CD4-positive, alpha-beta memory T cell (primary cell): ENCODE measurements at regions of chr10 and their contacts with region 1.

Region 1: GRCh38 chr10:100267237-100268104 is at the start of gene CWF19L1:
- DNase-seq: peak; percentile 67 to 75 (median 69)
- H3K4me3 ChIP-seq: peak within 1 kb of the TSS; percentile 78 to 95
- H3K4me3 Mint-ChIP-seq: peak within 1 kb of the TSS; percentile 97 to 100 (median 100)
- H3K27ac ChIP-seq: peak within 1 kb of the TSS; percentile 90
- H3K27ac Mint-ChIP-seq: peak within 1 kb of the TSS; percentile 94 to 100 (median 99)
- H3K4me1 ChIP-seq: peaks cover 29% of the 10 kb centered on the region
- H3K4me1 Mint-ChIP-seq: peaks cover 17 to 39% (median 24%) of the 10 kb centered on the region in 4 donors
- H3K27me3 ChIP-seq: no peaks in the 10 kb centered on the region
- H3K27me3 Mint-ChIP-seq: no peaks in the 10 kb centered on the region
- total RNA-seq, gene CWF19L1: 40.7 to 44.0 TPM

Region 2: GRCh38 chr10:100286051-100287033 is 18.9 kb after region 1 on chr10 and contains the start of gene BLOC1S2:
- CTCF ChIA-PET with region 1: no interaction called
- POLR2A ChIA-PET with region 1: interaction called, 12 read pairs
- intact Hi-C with region 1: loop called (anchors 1 kb)
- DNase-seq: peak; percentile 85 to 93 (median 86)
- H3K4me3 ChIP-seq: peak within 1 kb of the TSS; percentile 95 to 96
- H3K4me3 Mint-ChIP-seq: peak within 1 kb of the TSS; percentile 97 to 100 (median 100)
- H3K27ac ChIP-seq: peak within 1 kb of the TSS; percentile 98
- H3K27ac Mint-ChIP-seq: peak within 1 kb of the TSS; percentile 95 to 99 (median 98)
- H3K4me1 ChIP-seq: peaks cover 40% of the 10 kb centered on the region
- H3K4me1 Mint-ChIP-seq: peaks cover 21 to 32% (median 25%) of the 10 kb centered on the region in 4 donors
- H3K27me3 ChIP-seq: no peaks in the 10 kb centered on the region
- H3K27me3 Mint-ChIP-seq: no peaks in the 10 kb centered on the region
- total RNA-seq, gene BLOC1S2: 32.0 to 38.5 TPM